Activated T-helper 2 cell treated with anti-CD3 and anti-CD28 coated beads, Interferon-gamma antibody, Interleukin-2, Interleukin-4, amounts not matched to agents 10 μg/mL and 5 μg/mL and 100 μg/mL, durations not matched to agents 14 hours and 24 hours and 36 hours (primary cell): ENCODE measurements at regions of chr5 and their contacts with region 1.

Region 1: DNA sequence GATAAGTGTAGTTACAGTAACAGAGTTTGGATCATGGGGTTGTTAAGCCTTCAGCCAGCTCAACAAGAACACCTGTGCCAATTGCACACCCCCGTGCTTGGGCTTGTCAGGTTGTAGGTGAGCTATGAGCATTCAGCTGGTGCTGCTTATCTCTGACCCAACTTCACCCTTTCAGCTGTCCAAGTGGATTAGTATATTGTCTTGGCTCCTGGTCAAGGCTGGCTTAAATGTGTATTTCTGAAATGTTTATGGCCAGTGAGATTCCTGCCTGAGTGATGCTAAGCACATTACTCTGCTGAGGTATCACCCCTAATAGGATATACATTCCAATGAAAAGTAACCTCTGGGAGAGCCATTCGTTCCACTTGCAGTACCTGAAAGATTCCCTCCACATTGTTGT is 44.2 kb upstream of the LMNB1 start:
- DNase-seq: no peak
- H3K4me3 Mint-ChIP-seq: no peak overlapping the region
- H3K27ac Mint-ChIP-seq: no peak overlapping the region
- H3K4me1 Mint-ChIP-seq: peaks cover 13% of the 10 kb centered on the region
- H3K27me3 Mint-ChIP-seq: peaks cover under 1% of the 10 kb centered on the region

Region 2: GRCh38 chr5:125510651-125511050 is 1222.1 kb before region 1 on chr5:
- intact Hi-C with region 1: no loop called
- DNase-seq: no peak
- H3K4me3 Mint-ChIP-seq: no peak overlapping the region
- H3K27ac Mint-ChIP-seq: no peak overlapping the region
- H3K4me1 Mint-ChIP-seq: no peaks in the 10 kb centered on the region
- H3K27me3 Mint-ChIP-seq: no peaks in the 10 kb centered on the region

Region 3: DNA sequence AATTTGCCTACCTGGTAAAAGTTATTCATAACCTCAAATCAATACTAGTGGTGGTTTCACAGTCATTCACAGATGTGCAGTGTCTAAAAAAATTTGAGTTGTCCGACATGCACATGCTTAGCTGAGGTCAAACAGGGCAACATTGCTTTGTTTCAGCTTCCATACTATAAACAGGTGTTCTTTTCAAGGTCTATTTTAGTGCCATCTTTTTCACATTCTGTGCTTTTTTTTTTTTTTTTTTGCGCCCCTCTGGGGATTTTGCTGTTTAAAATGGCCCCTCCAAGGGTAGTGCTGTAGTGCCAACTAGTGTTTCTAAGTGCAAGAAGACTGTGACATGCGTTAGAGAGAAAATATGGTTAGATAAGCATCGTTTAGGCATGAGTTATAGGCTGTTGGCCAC is 117.4 kb before region 1 on chr5:
- intact Hi-C with region 1: no loop called
- DNase-seq: no peak
- H3K4me3 Mint-ChIP-seq: no peak overlapping the region
- H3K27ac Mint-ChIP-seq: no peak overlapping the region
- H3K4me1 Mint-ChIP-seq: peaks cover 5% of the 10 kb centered on the region
- H3K27me3 Mint-ChIP-seq: no peaks in the 10 kb centered on the region

Region 4: GRCh38 chr5:126686451-126687126 is 46.1 kb before region 1 on chr5:
- intact Hi-C with region 1: loop called (anchors 5 kb)
- DNase-seq: no peak
- H3K4me3 Mint-ChIP-seq: no peak overlapping the region
- H3K27ac Mint-ChIP-seq: peak overlapping the region; percentile 47
- H3K4me1 Mint-ChIP-seq: peaks cover 25% of the 10 kb centered on the region
- H3K27me3 Mint-ChIP-seq: no peaks in the 10 kb centered on the region